Dorsolateral prefrontal cortex (tissue), 120 donors: ENCODE measurements at regions of chr11 and their contacts with region 1.

Region 1: DNA sequence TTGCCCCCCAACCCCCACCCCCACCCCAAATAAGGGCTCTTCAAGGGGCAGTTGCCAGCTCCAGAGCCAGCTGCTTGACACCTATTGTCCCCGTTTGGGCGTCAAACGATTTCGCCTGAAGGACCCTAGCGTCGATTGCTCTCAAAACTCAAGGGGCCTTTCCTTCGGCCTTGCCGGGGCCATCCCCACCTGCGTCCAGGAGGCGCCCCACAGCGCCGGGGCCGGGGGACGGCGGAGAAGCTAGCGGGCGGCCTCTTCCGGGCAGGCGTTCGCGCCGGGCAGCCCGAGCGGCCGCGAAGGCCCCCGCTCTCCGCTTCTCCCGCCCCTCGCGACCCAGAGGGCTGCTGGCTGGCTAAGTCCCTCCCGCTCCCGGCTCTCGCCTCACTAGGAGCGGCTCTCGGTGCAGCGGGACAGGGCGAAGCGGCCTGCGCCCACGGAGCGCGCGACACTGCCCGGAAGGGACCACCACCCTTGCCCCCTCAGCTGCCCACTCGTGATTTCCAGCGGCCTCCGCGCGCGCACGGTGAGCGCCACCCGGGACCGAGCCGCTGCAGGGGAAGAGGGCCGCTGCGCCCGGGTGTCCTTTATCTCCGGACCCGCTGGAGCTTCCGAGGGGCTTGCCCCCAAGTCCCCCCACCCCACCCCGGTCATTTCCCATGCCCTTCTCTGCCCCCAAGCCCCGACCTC is at the start of gene CAPRIN1:
- DNase-seq: peak; percentile 70 to 91 (median 86)
- H3K4me3 ChIP-seq: peak within 1 kb of the TSS; percentile 66 to 99 (median 91)
- H3K27ac ChIP-seq: peak within 1 kb of the TSS; percentile 95 to 100 (median 100)
- H3K27me3 ChIP-seq: no peaks in the 10 kb centered on the region
- CTCF ChIP-seq: peak in 6 of 56 donors; percentile 2 to 19 (median 8)
- total RNA-seq, gene CAPRIN1: 117 to 192 (median 159) TPM

Region 2: GRCh38 chr11:33869481-33870422 is 181.7 kb before region 1 on chr11:
- intact Hi-C with region 1: loop called in 1 of 2 experiments (anchors 5 kb)
- DNase-seq: peak in 2 of 10 donors; percentile 24 to 59
- H3K4me3 ChIP-seq: peak overlapping the region; percentile 33 to 79 (median 68)
- H3K27ac ChIP-seq: peak overlapping the region in 56 of 59 donors; percentile 0 to 94 (median 81)
- H3K27me3 ChIP-seq: peaks cover 0 to 10% (median 0%) of the 10 kb centered on the region in 45 donors
- CTCF ChIP-seq: no peak

Region 3: GRCh38 chr11:33996498-33997454 is 54.7 kb before region 1 on chr11:
- intact Hi-C with region 1: loop called in 1 of 2 experiments (anchors 1 kb)
- DNase-seq: peak; percentile 31 to 72 (median 60)
- H3K4me3 ChIP-seq: peak overlapping the region in 45 of 59 donors; percentile 1 to 50 (median 30)
- H3K27ac ChIP-seq: peak overlapping the region in 17 of 59 donors; percentile 7 to 65 (median 41)
- H3K27me3 ChIP-seq: peaks cover 0 to 3% (median 0%) of the 10 kb centered on the region in 45 donors
- CTCF ChIP-seq: peak; percentile 54 to 93 (median 87)

Region 4: GRCh38 chr11:34105079-34105956 is 53.8 kb after region 1 on chr11 and contains the start of gene NAT10:
- intact Hi-C with region 1: loop called (anchors 1 kb)
- DNase-seq: peak; percentile 90 to 96 (median 94)
- H3K4me3 ChIP-seq: peak within 1 kb of the TSS; percentile 61 to 100 (median 95)
- H3K27ac ChIP-seq: peak within 1 kb of the TSS; percentile 78 to 99 (median 94)
- H3K27me3 ChIP-seq: no peaks in the 10 kb centered on the region
- CTCF ChIP-seq: peak in 37 of 56 donors; percentile 6 to 51 (median 27)
- total RNA-seq, gene NAT10: 41.9 to 72.5 (median 56.0) TPM

Region 5: DNA sequence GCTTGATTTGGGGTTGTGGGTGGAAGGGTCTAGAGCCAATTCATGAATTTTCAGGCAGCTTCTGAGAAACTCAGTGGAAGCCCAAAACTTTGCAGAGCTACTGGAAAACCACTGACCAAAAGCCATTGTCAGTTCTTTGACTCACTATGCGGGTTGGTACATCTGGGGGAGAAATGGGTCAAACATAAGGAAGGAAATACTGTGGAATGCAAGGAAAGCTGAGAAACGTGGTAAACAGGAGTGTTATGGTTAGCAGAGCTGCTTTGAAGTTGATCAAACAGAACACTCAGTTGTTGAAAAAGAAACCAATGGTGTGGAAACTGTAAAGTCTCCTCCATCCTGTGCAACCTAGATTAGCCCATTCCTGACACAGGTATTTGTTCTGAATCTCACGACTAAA is 312.6 kb after region 1 on chr11:
- intact Hi-C with region 1: loop called (anchors 2 to 5 kb)
- DNase-seq: no peak
- H3K4me3 ChIP-seq: no peak overlapping the region
- H3K27ac ChIP-seq: no peak overlapping the region
- H3K27me3 ChIP-seq: peaks cover 0 to 3% (median 0%) of the 10 kb centered on the region in 45 donors
- CTCF ChIP-seq: no peak

Region 6: GRCh38 chr11:34438529-34439507 is 387.3 kb after region 1 on chr11 and contains the start of gene CAT:
- intact Hi-C with region 1: loop called in 1 of 2 experiments (anchors 5 kb)
- DNase-seq: peak; percentile 88 to 97 (median 96)
- H3K4me3 ChIP-seq: peak within 1 kb of the TSS; percentile 55 to 94 (median 77)
- H3K27ac ChIP-seq: peak within 1 kb of the TSS; percentile 57 to 97 (median 87)
- H3K27me3 ChIP-seq: peaks cover 0 to 5% (median 0%) of the 10 kb centered on the region in 45 donors
- CTCF ChIP-seq: peak in 13 of 56 donors; percentile 9 to 43 (median 26)
- total RNA-seq, gene CAT: 22.7 to 77.5 (median 39.2) TPM